Ascending aorta (tissue), 2 donors: ENCODE measurements at regions of chr19 and their contacts with region 1.

Region 1: DNA sequence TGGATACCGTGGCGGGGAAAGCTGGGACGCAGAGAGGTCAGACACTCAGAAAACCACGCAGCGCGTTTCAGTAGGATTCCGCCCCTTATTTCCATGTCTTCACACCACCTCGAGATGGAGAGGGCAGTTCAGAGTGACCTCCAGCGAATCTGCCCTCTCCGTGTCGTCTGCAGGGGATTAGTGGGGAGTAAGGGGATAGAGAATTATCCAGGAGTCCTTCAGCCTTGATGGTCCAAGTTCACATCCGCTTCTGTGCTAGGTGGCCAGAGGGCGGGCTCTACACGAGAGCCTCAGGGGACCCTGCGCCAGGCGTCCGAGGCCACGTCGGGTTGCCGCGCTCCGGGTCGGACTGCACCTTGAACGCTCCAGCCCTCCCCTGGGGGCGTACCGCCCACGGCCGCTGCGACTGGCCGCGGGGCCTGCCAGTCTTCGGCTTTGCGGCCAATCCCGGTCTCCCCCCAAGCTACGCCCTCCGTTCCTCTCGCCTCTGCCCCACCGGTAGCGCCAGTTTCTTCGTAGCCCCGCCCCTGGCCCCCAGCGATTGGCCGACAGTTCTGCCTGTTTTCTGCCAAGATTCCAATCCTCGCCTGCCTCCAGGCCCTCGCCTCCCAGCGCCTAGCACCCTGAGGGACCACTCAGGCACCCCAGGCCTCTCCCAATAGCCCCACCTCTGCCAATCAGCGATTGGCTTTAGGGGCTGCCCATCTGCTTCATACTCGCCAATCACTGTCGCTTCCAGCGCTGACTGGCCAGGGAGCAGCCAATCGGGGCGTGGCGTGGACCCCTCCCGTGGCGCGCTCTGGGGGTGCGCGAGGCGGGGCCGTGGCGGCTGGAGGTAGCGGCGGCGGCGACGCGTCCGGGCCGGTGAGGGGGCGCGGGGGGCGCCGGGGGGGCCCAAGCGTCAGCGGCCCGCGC is at the start of gene SLC25A42:
- DNase-seq: peak; percentile 99 to 100
- H3K4me3 ChIP-seq: peak within 1 kb of the TSS; percentile 81 to 95
- H3K27ac ChIP-seq: peak within 1 kb of the TSS; percentile 62 to 78
- H3K4me1 ChIP-seq: peaks cover 0 to 21% of the 10 kb centered on the region in 2 donors
- H3K27me3 ChIP-seq: no peaks in the 10 kb centered on the region
- CTCF ChIP-seq: no peak
- total RNA-seq, gene SLC25A42: 8.9 TPM

Region 2: DNA sequence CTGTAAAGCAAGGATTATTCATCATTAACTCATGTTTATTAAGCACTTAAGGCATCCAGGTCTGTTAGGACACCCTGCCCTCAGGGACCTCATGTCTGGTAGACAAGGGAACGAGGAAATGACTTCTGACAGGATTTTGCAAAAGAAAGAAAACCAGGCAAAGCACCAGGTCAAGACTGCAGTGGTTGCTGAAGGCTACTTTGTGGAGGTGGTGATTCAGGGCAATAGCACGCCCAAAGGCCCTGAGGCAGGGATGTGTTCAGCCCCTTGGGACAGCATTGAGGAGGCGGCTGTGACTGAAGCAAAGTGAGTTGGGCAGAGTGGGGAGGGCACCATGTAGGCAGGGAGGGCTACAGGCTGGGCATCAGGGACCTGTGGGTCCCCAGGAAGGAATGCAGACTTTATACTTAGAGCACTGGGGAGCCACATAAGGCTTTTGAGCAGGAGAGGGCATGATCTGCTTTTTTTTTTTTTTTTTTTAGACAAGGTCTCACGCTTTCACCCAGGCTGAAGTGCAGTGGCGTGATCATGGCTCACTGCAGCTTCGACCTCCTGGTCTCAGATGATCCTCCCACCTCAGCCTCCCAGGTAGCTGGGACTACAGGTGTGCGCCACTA is 111.7 kb before region 1 on chr19:
- intact Hi-C with region 1: no loop called
- DNase-seq: no peak
- H3K4me3 ChIP-seq: no peak overlapping the region
- H3K27ac ChIP-seq: no peak overlapping the region
- H3K4me1 ChIP-seq: no peaks in the 10 kb centered on the region
- H3K27me3 ChIP-seq: no peaks in the 10 kb centered on the region
- CTCF ChIP-seq: no peak

Region 3: DNA sequence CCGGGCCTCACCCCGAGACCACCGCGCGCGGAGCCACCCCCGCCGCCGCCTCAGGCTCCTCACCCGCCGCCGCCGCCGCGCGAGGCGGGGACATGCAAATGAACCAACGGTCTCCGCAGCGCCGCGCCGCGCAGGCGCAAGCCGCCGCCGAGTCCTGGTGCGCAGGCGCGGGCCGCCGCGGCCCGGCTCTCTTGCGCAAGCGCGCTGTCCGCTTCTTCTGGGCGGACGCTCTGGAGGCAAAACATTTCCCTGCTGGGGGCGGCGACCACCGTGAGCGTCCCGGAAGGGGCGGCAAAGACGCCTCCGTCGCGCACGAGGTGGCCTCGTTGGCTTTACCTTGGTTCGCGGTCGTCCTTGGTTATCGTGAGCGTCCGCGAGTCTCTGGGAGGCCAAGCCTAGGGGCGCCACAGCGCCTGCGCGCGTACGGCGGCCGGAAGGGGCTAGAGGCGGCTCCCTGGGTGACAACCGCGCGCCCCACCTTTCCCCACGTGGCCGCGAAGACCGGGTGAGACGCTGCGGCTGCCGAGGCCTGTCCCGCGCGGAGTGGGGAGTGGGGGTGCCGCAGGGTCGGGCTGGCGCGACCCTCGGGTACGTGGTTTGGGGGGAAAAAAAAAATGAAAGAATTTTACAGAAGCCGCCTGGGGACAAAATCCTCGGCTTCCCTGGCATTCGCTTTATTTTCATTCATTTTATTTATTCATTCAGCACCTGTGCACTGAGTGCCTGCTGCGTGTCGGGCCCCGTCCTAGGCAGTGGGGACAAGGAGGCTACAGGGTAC is 29.8 kb before region 1 on chr19 and contains the starts of genes ARMC6 and SUGP2:
- intact Hi-C with region 1: loop called (anchors 1 kb)
- DNase-seq: peak; percentile 46 to 90
- H3K4me3 ChIP-seq: peak within 1 kb of the TSS; percentile 92 to 96
- H3K27ac ChIP-seq: peak within 1 kb of the TSS; percentile 85 to 94
- H3K4me1 ChIP-seq: peaks cover 5 to 14% of the 10 kb centered on the region in 2 donors
- H3K27me3 ChIP-seq: no peaks in the 10 kb centered on the region
- CTCF ChIP-seq: peak; percentile 7 to 49 (median 16)
- total RNA-seq, gene ARMC6: 34.7 TPM
- total RNA-seq, gene SUGP2: 23.6 TPM

Region 4: GRCh38 chr19:19040417-19040816 is 23.0 kb before region 1 on chr19:
- intact Hi-C with region 1: loop called (anchors 2 kb)
- DNase-seq: peak; percentile 25 to 90
- H3K4me3 ChIP-seq: no peak overlapping the region
- H3K27ac ChIP-seq: peak overlapping the region in 1 of 2 donors; percentile 50
- H3K4me1 ChIP-seq: no peaks in the 10 kb centered on the region
- H3K27me3 ChIP-seq: no peaks in the 10 kb centered on the region
- CTCF ChIP-seq: no peak